ENCODE measurements at regions of chr12 and their contacts with region 1.

Region 1: DNA sequence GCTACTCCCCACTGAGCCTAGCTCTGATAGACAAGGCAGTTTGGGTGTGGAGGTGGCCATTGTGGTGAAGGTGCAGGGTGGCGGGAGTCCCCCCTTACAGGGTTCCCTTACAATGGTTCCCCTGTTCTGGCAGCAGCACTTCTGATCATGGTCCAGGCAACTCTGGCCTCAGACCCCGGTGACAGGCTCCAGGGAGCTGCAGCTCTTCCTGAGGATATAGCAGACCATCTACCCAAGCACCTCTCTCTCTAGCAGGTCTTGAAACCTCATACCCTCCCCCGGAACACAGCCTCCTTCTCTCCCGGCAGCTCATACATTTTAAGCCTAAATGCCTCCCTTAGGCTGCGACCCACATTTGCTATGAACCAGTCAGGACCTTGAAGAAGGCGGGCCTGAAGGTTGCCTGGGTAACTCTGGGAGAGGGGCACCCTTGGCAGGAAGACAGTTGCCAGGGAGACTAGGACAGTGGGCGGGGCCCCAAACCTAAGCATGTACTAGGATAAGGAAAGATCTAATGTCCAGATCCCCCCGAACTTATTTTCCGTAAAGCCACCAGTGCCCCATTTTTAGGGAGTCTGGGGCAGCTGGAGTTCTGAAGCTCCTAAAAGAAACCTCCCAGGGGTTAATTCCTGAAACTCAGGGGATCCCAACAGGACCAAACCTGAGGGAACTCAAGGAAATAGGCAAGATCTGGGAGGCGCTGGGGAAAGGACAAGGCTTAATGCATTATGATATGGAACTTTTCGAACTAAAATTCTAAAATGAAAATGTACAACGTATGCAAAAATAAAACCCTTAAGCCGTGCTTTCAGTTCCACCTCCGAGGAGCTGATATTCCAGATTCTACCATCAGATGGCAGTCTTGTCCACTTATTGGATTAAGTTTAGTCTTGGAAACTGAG is 4.5 kb upstream of the GDF11 start:
- DNase-seq: peak; percentile 72
- ATAC-seq: peak; percentile 57
- H3K4me3 ChIP-seq: peak overlapping the region; percentile 50 to 66 (median 63)
- H3K27ac ChIP-seq: peak overlapping the region; percentile 34
- H3K4me1 ChIP-seq: peaks cover 36% of the 10 kb centered on the region
- H3K27me3 ChIP-seq: peaks cover 0 to 6% of the 10 kb centered on the region in 2 experiments; a peak in 2 of 5 replicates
- CTCF ChIP-seq: peak; percentile 85
- EP300 ChIP-seq: peak in 1 of 2 experiments; percentile 88; a peak in 1 of 4 replicates
- POLR2A ChIP-seq: no peak
- RAD21 ChIP-seq: peak; percentile 71; the same call in 1 of the 2 replicates

Region 2: GRCh38 chr12:55659486-55660385 is 78.6 kb before region 1 on chr12:
- CTCF ChIA-PET with region 1: interaction called, 23 read pairs
- POLR2A ChIA-PET with region 1: no interaction called
- in situ Hi-C with region 1: loop called (anchors 5 kb)
- intact Hi-C with region 1: loop called (anchors 1 kb)
- DNase-seq: peak; percentile 27
- ATAC-seq: peak; percentile 76
- H3K4me3 ChIP-seq: no peak overlapping the region
- H3K27ac ChIP-seq: no peak overlapping the region
- H3K4me1 ChIP-seq: peaks cover 10% of the 10 kb centered on the region
- H3K27me3 ChIP-seq: 0 out of 5 replicates have a peak, but pooled peaks cover 0 to 1% of the 10 kb centered on the region in 2 experiments
- CTCF ChIP-seq: peak; percentile 66
- EP300 ChIP-seq: no peak
- POLR2A ChIP-seq: no peak
- RAD21 ChIP-seq: peak; percentile 49; the same call in 1 of the 2 replicates

Region 3: DNA sequence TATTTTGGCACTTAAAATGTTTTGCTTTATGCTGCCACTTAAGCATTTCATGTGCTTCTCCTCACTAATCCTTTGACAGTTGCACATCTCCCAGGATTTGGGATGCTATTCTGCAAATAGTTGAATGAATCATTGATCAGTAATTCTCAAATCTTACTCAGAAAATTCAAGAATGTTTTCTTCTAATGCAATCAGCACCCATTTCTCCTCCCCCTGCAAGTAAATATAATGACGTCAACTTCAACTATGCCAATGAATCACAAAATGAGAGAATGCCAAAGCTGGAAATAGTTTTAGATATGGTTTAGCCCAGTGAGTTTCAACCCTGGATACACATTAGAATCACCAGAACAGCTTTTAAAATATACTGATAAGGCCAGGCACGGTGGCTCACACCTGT is 24.7 kb before region 1 on chr12:
- CTCF ChIA-PET with region 1: no interaction called
- POLR2A ChIA-PET with region 1: no interaction called
- in situ Hi-C with region 1: no loop called
- intact Hi-C with region 1: no loop called
- DNase-seq: no peak
- ATAC-seq: no peak
- H3K4me3 ChIP-seq: no peak overlapping the region
- H3K27ac ChIP-seq: no peak overlapping the region
- H3K4me1 ChIP-seq: peaks cover 31% of the 10 kb centered on the region
- H3K27me3 ChIP-seq: peaks cover 0 to 29% of the 10 kb centered on the region in 2 experiments; a peak in 2 of 5 replicates
- CTCF ChIP-seq: no peak
- EP300 ChIP-seq: no peak
- POLR2A ChIP-seq: no peak
- RAD21 ChIP-seq: no peak

Region 4: GRCh38 chr12:55797068-55797467 is 58.7 kb after region 1 on chr12:
- CTCF ChIA-PET with region 1: interaction called, 15 read pairs
- POLR2A ChIA-PET with region 1: interaction called, 3 read pairs
- in situ Hi-C with region 1: loop called (anchors 5 kb)
- intact Hi-C with region 1: loop called (anchors 1 kb)
- DNase-seq: peak; percentile 51
- ATAC-seq: peak; percentile 43; the same call in 2 of the 3 replicates
- H3K4me3 ChIP-seq: no peak overlapping the region
- H3K27ac ChIP-seq: no peak overlapping the region
- H3K4me1 ChIP-seq: no peaks in the 10 kb centered on the region
- H3K27me3 ChIP-seq: no peaks in the 10 kb centered on the region
- CTCF ChIP-seq: peak; percentile 62
- EP300 ChIP-seq: no peak
- POLR2A ChIP-seq: no peak
- RAD21 ChIP-seq: no peak

Region 5: DNA sequence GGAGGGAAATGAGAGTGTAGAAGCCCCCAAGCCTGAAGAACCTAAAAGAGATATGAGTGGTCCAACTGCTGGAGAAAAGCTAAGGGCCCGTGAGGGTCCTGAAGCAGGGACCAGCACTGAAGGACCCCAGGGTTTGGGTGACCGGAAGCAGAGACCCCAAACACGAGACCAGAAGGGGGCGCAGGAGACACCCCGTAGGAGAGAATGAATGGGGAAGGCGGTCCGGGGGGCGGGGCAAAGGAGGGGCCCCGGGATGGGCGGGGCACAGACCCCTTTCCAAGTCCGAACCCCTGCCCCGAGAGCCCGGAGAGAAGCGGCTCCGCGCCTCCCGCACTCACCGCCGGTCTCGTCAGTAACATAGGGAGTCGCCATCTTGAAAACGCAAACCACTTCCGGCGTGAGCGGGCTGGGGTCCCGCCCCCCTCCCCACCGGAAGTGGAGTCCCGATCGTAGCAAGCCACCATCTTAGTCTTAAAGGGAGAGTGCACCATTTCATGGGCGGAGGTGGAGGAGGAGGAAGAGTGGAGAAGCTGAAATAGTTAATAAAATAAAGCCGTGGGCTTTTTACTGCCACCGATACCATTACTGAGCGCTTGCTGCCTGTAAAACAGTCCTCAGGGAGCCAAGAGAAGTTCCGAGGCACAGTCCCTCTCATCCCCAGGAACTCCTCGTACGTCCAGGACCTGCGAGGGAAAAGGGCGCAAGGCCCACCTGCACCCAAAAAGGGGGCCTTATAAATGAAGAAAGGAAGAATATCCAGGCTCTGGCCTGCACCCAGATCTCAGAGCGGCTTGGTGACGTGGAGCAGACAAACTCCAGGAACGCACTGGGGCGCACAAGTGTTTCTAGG is 188.6 kb after region 1 on chr12:
- CTCF ChIA-PET with region 1: no interaction called
- POLR2A ChIA-PET with region 1: interaction called, 3 read pairs
- in situ Hi-C with region 1: no loop called
- intact Hi-C with region 1: loop called (anchors 5 kb)
- DNase-seq: peak; percentile 90
- ATAC-seq: peak; percentile 73
- H3K4me3 ChIP-seq: peak overlapping the region; percentile 72 to 90 (median 89)
- H3K27ac ChIP-seq: peak overlapping the region; percentile 96
- H3K4me1 ChIP-seq: peaks cover 58% of the 10 kb centered on the region
- H3K27me3 ChIP-seq: no peaks in the 10 kb centered on the region; a peak in 1 of 5 replicates
- CTCF ChIP-seq: peak; percentile 79
- EP300 ChIP-seq: no peak
- POLR2A ChIP-seq: peak; percentile 56 to 62
- RAD21 ChIP-seq: no peak

Region 6: GRCh38 chr12:55966408-55967281 is 228.3 kb after region 1 on chr12 and contains the start of gene CDK2:
- CTCF ChIA-PET with region 1: no interaction called
- POLR2A ChIA-PET with region 1: no interaction called
- in situ Hi-C with region 1: no loop called
- intact Hi-C with region 1: no loop called
- DNase-seq: peak; percentile 76
- ATAC-seq: peak; percentile 93
- H3K4me3 ChIP-seq: peak within 1 kb of the TSS; percentile 87 to 93 (median 90)
- H3K27ac ChIP-seq: peak within 1 kb of the TSS; percentile 69
- H3K4me1 ChIP-seq: peaks cover 29% of the 10 kb centered on the region
- H3K27me3 ChIP-seq: no peaks in the 10 kb centered on the region
- CTCF ChIP-seq: no peak
- EP300 ChIP-seq: no peak
- POLR2A ChIP-seq: peak; percentile 34 to 73; a peak in 2 of 4 replicates
- RAD21 ChIP-seq: no peak; the same call in 1 of the 2 replicates
- total RNA-seq, gene CDK2: 47.5 and 52.0 TPM in 2 replicates

Region 7: GRCh38 chr12:56029666-56030293 is 291.4 kb after region 1 on chr12:
- CTCF ChIA-PET with region 1: interaction called, 5 read pairs
- POLR2A ChIA-PET with region 1: no interaction called
- in situ Hi-C with region 1: loop called (anchors 5 kb)
- intact Hi-C with region 1: no loop called
- DNase-seq: peak; percentile 71
- ATAC-seq: peak; percentile 94
- H3K4me3 ChIP-seq: no peak overlapping the region
- H3K27ac ChIP-seq: no peak overlapping the region
- H3K4me1 ChIP-seq: peaks cover 13% of the 10 kb centered on the region
- H3K27me3 ChIP-seq: no peaks in the 10 kb centered on the region
- CTCF ChIP-seq: peak; percentile 82
- EP300 ChIP-seq: no peak
- POLR2A ChIP-seq: no peak
- RAD21 ChIP-seq: peak; percentile 77

Region 8: GRCh38 chr12:56374726-56375597 is 636.6 kb after region 1 on chr12:
- CTCF ChIA-PET with region 1: no interaction called
- POLR2A ChIA-PET with region 1: no interaction called
- in situ Hi-C with region 1: no loop called
- intact Hi-C with region 1: no loop called
- DNase-seq: peak; percentile 62
- ATAC-seq: peak; percentile 69
- H3K4me3 ChIP-seq: no peak overlapping the region
- H3K27ac ChIP-seq: peak overlapping the region; percentile 4
- H3K4me1 ChIP-seq: peaks cover 45% of the 10 kb centered on the region
- H3K27me3 ChIP-seq: no peaks in the 10 kb centered on the region
- CTCF ChIP-seq: no peak
- EP300 ChIP-seq: no peak
- POLR2A ChIP-seq: no peak
- RAD21 ChIP-seq: no peak

Measured in HepG2 (cell line).